H1 (cell line): ENCODE measurements at regions of chr6 and their contacts with region 1.

Region 1: DNA sequence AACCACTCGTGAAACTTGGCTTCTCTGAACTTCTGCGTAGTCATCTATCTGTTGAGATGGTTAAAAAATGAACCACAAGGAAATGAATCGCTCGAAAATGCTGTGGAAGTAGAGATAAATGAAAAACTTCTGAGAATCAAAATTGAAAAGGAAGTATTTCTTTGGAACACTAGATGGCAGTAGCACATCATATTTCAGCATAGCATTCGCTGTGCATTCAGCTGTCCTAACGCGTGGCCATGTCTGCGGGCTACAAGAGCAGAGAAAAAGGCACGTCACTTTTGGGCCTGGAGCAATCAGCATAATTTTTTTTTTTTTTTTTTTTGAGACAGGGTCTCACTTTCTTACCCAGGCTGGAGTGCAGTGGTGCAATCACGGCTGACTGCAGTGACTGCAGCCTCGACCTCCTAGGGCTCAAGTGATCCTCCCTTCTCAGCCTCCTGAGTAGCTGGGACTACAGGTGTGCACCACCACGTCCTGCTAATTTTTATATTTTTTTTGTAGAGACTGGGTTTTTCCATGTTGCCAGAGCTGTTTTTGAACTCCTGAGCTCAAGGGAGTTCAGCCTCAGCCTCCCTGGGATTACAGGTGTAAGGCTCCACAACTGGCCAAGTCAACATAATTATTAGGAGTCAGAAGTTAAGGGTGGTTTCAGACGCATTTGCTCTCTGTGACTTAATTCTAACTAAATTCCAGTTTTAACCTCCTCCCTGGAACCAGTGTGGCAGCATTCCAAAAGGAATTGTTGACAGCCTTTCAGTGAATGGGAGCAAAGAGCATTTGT is 8.8 kb upstream of the PERP start:
- DNase-seq: no peak
- H3K4me3 ChIP-seq: no peak overlapping the region
- H3K27ac ChIP-seq: no peak overlapping the region
- H3K4me1 ChIP-seq: peaks cover 0 to 3% (median 2%) of the 10 kb centered on the region in 4 experiments; a peak in 3 of 7 replicates
- H3K27me3 ChIP-seq: no peaks in the 10 kb centered on the region; a peak in 1 of 7 replicates
- CTCF ChIP-seq: peak in 2 of 3 experiments; percentile 68 to 85; a peak in 3 of 4 replicates
- EP300 ChIP-seq: no peak
- POLR2A ChIP-seq: no peak
- RAD21 ChIP-seq: peak; percentile 95 to 97

Region 2: DNA sequence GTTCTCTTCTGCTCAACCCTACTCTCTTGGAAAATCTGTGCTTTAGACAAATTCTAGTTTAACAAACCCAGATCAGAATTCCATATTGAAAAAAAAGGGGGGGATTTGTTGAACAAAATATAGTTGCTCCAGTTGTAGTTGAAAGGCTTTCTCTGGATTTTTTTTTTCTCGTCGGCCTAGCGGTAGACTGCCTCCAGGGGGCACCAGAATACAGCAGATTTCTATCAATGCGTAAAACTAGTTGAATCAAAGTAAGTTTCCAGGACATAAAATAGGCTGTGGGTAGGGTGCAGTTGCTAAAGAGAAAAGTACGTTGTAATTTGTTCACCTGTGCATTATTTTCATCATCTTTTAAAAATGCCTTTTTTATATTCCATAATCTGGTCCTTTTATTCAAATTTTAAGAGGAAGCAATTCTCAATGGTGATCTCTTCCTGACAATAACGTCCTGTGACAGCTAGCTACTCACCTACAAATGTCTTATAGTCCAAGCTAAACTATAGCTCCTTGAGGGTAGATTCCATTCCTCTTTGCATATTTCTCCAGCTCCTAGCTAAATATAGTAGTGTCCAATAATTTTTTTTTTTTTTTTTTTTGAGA is 114.2 kb before region 1 on chr6:
- CTCF ChIA-PET with region 1: interaction called, 44 read pairs
- POLR2A ChIA-PET with region 1: interaction called, 4 read pairs
- DNase-seq: peak in 1 of 2 experiments; percentile 73
- H3K4me3 ChIP-seq: no peak overlapping the region
- H3K27ac ChIP-seq: no peak overlapping the region
- H3K4me1 ChIP-seq: peaks cover 0 to 5% (median 1%) of the 10 kb centered on the region in 4 experiments; a peak in 3 of 7 replicates
- H3K27me3 ChIP-seq: no peaks in the 10 kb centered on the region
- CTCF ChIP-seq: peak; percentile 7 to 85 (median 78)
- EP300 ChIP-seq: no peak
- POLR2A ChIP-seq: no peak
- RAD21 ChIP-seq: peak; percentile 91 to 93

Region 3: DNA sequence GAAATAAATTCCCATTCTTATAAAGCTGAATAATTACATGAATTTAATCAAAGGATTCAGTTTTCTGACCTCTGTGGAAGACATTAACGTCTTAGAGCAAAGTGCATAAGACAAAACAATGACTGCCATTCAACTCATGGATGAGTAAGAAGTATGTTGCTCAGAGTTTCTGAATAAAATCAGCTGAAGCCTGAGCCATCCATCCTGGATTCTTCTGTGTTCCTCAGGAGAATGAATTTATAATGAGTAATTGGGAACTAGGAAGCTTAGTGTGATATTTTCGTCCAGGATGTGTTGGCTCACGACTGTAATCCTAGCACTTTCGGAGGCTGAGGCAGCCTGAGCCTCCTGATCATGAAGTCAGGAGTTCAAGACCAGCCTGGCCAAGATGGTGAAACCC is 71.6 kb before region 1 on chr6:
- CTCF ChIA-PET with region 1: no interaction called
- POLR2A ChIA-PET with region 1: no interaction called
- DNase-seq: no peak
- H3K4me3 ChIP-seq: no peak overlapping the region
- H3K27ac ChIP-seq: no peak overlapping the region
- H3K4me1 ChIP-seq: no peaks in the 10 kb centered on the region
- H3K27me3 ChIP-seq: no peaks in the 10 kb centered on the region
- CTCF ChIP-seq: no peak
- EP300 ChIP-seq: no peak
- POLR2A ChIP-seq: no peak
- RAD21 ChIP-seq: no peak

Region 4: GRCh38 chr6:138211027-138211581 is 95.0 kb after region 1 on chr6:
- CTCF ChIA-PET with region 1: interaction called, 111 read pairs
- POLR2A ChIA-PET with region 1: no interaction called
- DNase-seq: no peak
- H3K4me3 ChIP-seq: no peak overlapping the region
- H3K27ac ChIP-seq: no peak overlapping the region
- H3K4me1 ChIP-seq: peaks cover 0 to 4% (median 0%) of the 10 kb centered on the region in 4 experiments; a peak in 1 of 7 replicates
- H3K27me3 ChIP-seq: no peaks in the 10 kb centered on the region
- CTCF ChIP-seq: peak in 2 of 3 experiments; percentile 51 to 64; a peak in 3 of 4 replicates
- EP300 ChIP-seq: no peak
- POLR2A ChIP-seq: no peak
- RAD21 ChIP-seq: peak; percentile 72 to 75

Region 5: DNA sequence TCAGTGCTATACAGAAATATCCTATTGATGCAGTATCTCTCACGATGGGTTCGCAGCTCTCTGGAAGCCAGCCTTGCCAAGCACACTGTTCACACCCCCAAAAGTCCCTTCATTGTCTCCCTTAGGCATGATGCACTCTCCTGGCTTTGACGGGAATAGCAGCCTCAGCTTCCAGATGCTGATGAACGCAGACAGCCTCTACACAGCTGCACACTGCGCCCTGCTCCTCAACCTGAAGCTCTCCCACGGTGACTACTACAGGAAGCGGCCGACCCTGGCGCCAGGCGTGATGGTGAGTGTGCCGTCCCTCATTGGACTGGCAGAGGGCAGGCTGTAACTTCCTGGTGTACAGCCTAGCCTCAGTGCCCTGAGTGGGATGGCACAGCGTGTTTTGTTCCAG is 162.3 kb after region 1 on chr6:
- CTCF ChIA-PET with region 1: interaction called, 106 read pairs
- POLR2A ChIA-PET with region 1: interaction called, 3 read pairs
- DNase-seq: peak in 1 of 2 experiments; percentile 46
- H3K4me3 ChIP-seq: no peak overlapping the region
- H3K27ac ChIP-seq: no peak overlapping the region
- H3K4me1 ChIP-seq: no peaks in the 10 kb centered on the region
- H3K27me3 ChIP-seq: no peaks in the 10 kb centered on the region
- CTCF ChIP-seq: peak; percentile 53 to 68 (median 59)
- EP300 ChIP-seq: no peak
- POLR2A ChIP-seq: no peak
- RAD21 ChIP-seq: peak; percentile 60 to 69

Region 6: GRCh38 chr6:138397128-138398122 is 281.4 kb after region 1 on chr6:
- CTCF ChIA-PET with region 1: interaction called, 35 read pairs
- POLR2A ChIA-PET with region 1: no interaction called
- DNase-seq: no peak
- H3K4me3 ChIP-seq: no peak overlapping the region
- H3K27ac ChIP-seq: no peak overlapping the region
- H3K4me1 ChIP-seq: no peaks in the 10 kb centered on the region; a peak in 1 of 7 replicates
- H3K27me3 ChIP-seq: no peaks in the 10 kb centered on the region; a peak in 1 of 7 replicates
- CTCF ChIP-seq: peak in 1 of 3 experiments; percentile 6; a peak in 1 of 4 replicates
- EP300 ChIP-seq: no peak
- POLR2A ChIP-seq: no peak
- RAD21 ChIP-seq: peak; percentile 30 to 47

Region 7: DNA sequence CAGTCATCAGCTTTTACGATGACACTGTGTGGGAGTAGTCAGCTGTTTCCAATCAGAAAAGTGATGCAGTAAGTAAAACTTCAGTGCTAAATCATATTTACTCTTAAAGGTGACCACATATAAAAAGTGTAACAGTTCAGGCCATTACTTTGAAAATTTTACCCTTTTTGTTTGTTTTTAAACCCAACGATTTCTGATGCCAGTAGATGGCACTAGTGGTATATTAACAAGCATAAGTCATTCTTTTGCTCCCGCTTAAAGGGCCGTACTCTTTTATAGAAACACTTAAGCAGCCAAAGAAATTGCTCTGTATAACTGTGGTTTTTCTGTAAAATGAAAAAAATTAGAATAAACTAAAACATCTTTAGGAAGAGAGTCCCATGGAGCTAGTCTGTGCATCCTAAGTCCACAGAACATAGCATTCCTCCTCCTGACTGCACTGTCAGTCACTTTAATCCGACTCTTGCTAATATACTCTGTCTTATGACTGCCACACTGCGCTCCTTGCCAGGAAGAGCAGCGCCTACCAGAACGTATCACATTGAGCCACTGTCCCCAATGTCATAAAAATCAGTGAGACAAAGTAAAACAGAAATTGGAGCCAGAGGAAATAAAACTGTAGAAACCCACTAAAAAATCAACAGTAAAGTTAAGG is 313.0 kb after region 1 on chr6:
- CTCF ChIA-PET with region 1: interaction called, 13 read pairs
- POLR2A ChIA-PET with region 1: interaction called, 3 read pairs
- DNase-seq: no peak
- H3K4me3 ChIP-seq: no peak overlapping the region
- H3K27ac ChIP-seq: no peak overlapping the region
- H3K4me1 ChIP-seq: no peaks in the 10 kb centered on the region; a peak in 2 of 7 replicates
- H3K27me3 ChIP-seq: no peaks in the 10 kb centered on the region
- CTCF ChIP-seq: peak in 2 of 3 experiments; percentile 41 to 47; a peak in 2 of 4 replicates
- EP300 ChIP-seq: no peak
- POLR2A ChIP-seq: no peak
- RAD21 ChIP-seq: peak; percentile 74 to 75

Region 8: GRCh38 chr6:139003751-139004150 is 887.7 kb after region 1 on chr6:
- CTCF ChIA-PET with region 1: no interaction called
- POLR2A ChIA-PET with region 1: no interaction called
- DNase-seq: no peak
- H3K4me3 ChIP-seq: no peak overlapping the region
- H3K27ac ChIP-seq: no peak overlapping the region
- H3K4me1 ChIP-seq: no peaks in the 10 kb centered on the region
- H3K27me3 ChIP-seq: no peaks in the 10 kb centered on the region; a peak in 1 of 7 replicates
- CTCF ChIP-seq: no peak
- EP300 ChIP-seq: no peak
- POLR2A ChIP-seq: no peak
- RAD21 ChIP-seq: no peak